IMR-90 (cell line): ENCODE measurements at regions of chr7 and their contacts with region 1.

Region 1: DNA sequence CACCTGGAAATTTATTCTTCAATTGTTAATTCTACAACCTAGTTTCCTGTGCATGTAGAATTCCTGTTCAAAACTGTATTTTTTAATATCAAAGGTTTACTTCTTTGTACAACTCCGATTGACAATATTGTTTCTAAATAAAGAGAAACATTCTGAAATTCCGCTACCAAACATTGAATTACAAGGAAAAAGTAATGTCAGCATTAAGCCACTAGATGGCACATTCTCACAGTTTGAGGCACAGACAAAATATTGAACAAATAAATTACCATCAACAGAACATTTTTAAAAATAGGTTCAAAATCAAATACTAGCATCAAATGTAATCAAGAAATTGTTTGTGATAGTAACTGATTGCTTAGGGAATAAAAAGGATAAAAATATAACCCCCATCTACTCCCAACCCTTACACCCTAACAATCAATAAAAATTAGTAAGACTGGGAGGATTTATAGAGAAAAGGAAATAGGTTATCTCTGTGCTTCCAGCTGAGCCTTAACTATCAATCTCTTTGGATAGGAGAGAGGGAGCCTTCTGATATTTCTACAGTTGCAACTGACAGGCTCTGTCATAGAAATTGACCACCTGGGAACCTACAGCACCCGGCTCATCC is 86.6 kb upstream of the C7orf33 start:
- DNase-seq: peak; percentile 37
- ATAC-seq: no peak
- H3K4me3 ChIP-seq: no peak overlapping the region
- H3K27ac ChIP-seq: no peak overlapping the region
- H3K4me1 ChIP-seq: no peaks in the 10 kb centered on the region
- H3K27me3 ChIP-seq: peaks cover 8% of the 10 kb centered on the region
- CTCF ChIP-seq: peak; percentile 85
- POLR2A ChIP-seq: no peak
- RAD21 ChIP-seq: peak; percentile 77

Region 2: DNA sequence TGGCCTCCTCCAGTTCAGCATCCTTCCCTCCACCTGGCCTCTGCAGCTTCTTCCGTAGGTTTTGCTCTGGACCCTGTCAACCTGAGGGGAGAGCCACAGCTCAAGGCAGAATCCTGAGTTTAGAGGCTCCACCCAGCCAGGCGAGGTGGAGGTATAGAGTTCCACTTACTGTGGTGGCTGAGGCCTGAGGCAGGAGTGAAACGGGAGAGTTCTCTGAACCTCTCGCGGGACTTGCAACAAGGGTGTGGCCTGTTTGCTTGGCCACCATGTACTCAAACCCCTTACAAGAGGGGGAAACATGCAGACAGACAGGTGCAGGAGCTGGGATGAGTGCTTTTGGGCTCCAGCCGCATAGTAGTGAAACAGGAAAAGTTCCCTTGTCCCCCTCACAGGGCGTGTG is 67.4 kb before region 1 on chr7:
- CTCF ChIA-PET with region 1: no interaction called
- POLR2A ChIA-PET with region 1: no interaction called
- dilution Hi-C with region 1: no loop called
- in situ Hi-C with region 1: no loop called
- intact Hi-C with region 1: no loop called
- DNase-seq: no peak
- ATAC-seq: no peak
- H3K4me3 ChIP-seq: no peak overlapping the region
- H3K27ac ChIP-seq: no peak overlapping the region
- H3K4me1 ChIP-seq: no peaks in the 10 kb centered on the region
- H3K27me3 ChIP-seq: no peaks in the 10 kb centered on the region
- CTCF ChIP-seq: no peak
- POLR2A ChIP-seq: no peak
- RAD21 ChIP-seq: no peak

Region 3: DNA sequence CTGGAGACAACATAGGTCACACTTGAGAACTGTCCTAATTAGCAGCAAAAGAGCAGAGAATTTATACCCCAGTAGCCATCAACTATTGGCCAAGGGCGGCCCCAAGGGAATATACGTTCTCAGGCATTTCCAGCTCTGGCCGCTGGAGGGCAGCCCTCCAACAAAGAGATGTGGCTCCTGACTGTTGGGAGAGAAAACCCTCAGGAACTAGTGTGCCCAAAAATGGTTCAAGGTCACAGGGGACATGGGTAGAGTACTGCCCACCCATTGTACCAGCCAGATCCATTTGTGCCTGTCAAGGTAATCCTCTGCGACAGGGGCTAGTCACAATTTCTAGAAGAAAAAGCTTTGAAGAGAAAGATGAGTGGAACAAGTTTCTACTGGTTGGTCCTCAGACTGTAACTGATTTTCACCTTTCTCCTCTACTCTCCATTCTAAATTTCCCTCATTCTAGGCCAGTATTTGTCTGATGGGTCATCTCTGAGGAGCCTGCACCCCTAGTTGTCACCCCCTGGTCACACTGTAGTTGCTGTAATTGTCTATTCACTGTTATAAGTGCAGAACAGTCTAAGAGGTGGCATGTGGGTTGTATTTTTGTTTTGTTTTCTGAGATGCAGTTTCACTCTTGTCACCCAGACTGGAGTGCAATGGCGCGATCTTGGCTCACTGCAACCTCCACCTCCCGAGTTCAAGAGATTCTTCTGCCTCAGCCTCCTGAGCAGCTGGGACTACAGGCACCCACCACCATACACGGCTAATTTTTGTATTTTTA is 71.8 kb after region 1 on chr7:
- CTCF ChIA-PET with region 1: no interaction called
- POLR2A ChIA-PET with region 1: no interaction called
- dilution Hi-C with region 1: no loop called
- in situ Hi-C with region 1: no loop called
- intact Hi-C with region 1: loop called (anchors 2 kb)
- DNase-seq: peak; percentile 41
- ATAC-seq: peak; percentile 98
- H3K4me3 ChIP-seq: no peak overlapping the region
- H3K27ac ChIP-seq: no peak overlapping the region
- H3K4me1 ChIP-seq: no peaks in the 10 kb centered on the region
- H3K27me3 ChIP-seq: peaks cover 2% of the 10 kb centered on the region; the same call in 1 of the 2 replicates
- CTCF ChIP-seq: peak; percentile 85
- POLR2A ChIP-seq: no peak
- RAD21 ChIP-seq: peak; percentile 83

Region 4: GRCh38 chr7:148763622-148764021 is 259.6 kb after region 1 on chr7:
- CTCF ChIA-PET with region 1: no interaction called
- POLR2A ChIA-PET with region 1: no interaction called
- dilution Hi-C with region 1: no loop called
- in situ Hi-C with region 1: no loop called
- intact Hi-C with region 1: loop called (anchors 10 kb)
- DNase-seq: peak; percentile 55
- ATAC-seq: peak; percentile 86
- H3K4me3 ChIP-seq: no peak overlapping the region
- H3K27ac ChIP-seq: no peak overlapping the region
- H3K4me1 ChIP-seq: peaks cover 9% of the 10 kb centered on the region
- H3K27me3 ChIP-seq: no peaks in the 10 kb centered on the region
- CTCF ChIP-seq: no peak
- POLR2A ChIP-seq: no peak
- RAD21 ChIP-seq: no peak

Region 5: GRCh38 chr7:149348758-149349369 is 844.9 kb after region 1 on chr7:
- CTCF ChIA-PET with region 1: no interaction called
- POLR2A ChIA-PET with region 1: no interaction called
- dilution Hi-C with region 1: no loop called
- in situ Hi-C with region 1: no loop called
- intact Hi-C with region 1: no loop called
- DNase-seq: no peak
- ATAC-seq: no peak
- H3K4me3 ChIP-seq: no peak overlapping the region
- H3K27ac ChIP-seq: no peak overlapping the region
- H3K4me1 ChIP-seq: no peaks in the 10 kb centered on the region
- H3K27me3 ChIP-seq: no peaks in the 10 kb centered on the region
- CTCF ChIP-seq: no peak
- POLR2A ChIP-seq: no peak
- RAD21 ChIP-seq: no peak